Common myeloid progenitor, CD34-positive (primary cell): ENCODE measurements at regions of chr1 and their contacts with region 1.

Region 1: GRCh38 chr1:248622570-248623001 is 12.3 kb downstream of the OR2T11 start:
- DNase-seq: peak; percentile 49 to 73 (median 69)
- H3K4me3 ChIP-seq: no peak overlapping the region
- H3K27ac ChIP-seq: no peak overlapping the region
- H3K4me1 ChIP-seq: no peaks in the 10 kb centered on the region
- H3K27me3 ChIP-seq: no peaks in the 10 kb centered on the region

Region 2: DNA sequence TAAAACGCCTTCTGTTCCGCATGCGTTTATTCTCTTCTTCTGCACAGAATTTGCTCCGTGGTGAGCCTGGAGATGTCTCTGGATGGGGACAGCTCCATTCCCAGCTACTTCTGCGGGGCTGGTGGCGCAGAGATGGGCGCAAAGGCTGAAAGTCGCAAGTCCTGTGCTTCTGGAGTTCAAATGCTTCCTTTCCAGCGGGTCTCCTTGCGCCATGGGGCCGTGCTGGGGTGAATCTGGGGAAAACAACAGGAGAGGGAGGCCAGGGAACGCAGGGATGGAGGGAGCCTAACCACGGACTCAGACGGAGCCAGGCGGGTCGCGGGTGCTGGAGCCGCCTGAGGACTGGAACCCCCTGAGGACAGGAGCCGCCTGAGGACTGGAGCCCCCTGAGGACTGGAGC is 316.5 kb before region 1 on chr1:
- CTCF ChIA-PET with region 1: no interaction called
- POLR2A ChIA-PET with region 1: no interaction called
- DNase-seq: no peak
- H3K4me3 ChIP-seq: no peak overlapping the region
- H3K27ac ChIP-seq: no peak overlapping the region
- H3K4me1 ChIP-seq: no peaks in the 10 kb centered on the region
- H3K27me3 ChIP-seq: no peaks in the 10 kb centered on the region

Region 3: GRCh38 chr1:248611883-248612414 is 10.6 kb before region 1 on chr1:
- CTCF ChIA-PET with region 1: interaction called, 10 read pairs
- POLR2A ChIA-PET with region 1: no interaction called
- DNase-seq: peak in 2 of 3 donors; percentile 18 to 41
- H3K4me3 ChIP-seq: no peak overlapping the region
- H3K27ac ChIP-seq: no peak overlapping the region
- H3K4me1 ChIP-seq: peaks cover 0 to 2% (median 0%) of the 10 kb centered on the region in 4 experiments
- H3K27me3 ChIP-seq: no peaks in the 10 kb centered on the region

Region 4: GRCh38 chr1:248696261-248696660 is 73.7 kb after region 1 on chr1:
- CTCF ChIA-PET with region 1: interaction called, 13 read pairs
- POLR2A ChIA-PET with region 1: no interaction called
- DNase-seq: peak; percentile 47 to 73 (median 70)
- H3K4me3 ChIP-seq: no peak overlapping the region
- H3K27ac ChIP-seq: no peak overlapping the region
- H3K4me1 ChIP-seq: peaks cover 0 to 3% (median 0%) of the 10 kb centered on the region in 4 experiments
- H3K27me3 ChIP-seq: peaks cover 0 to 6% (median 0%) of the 10 kb centered on the region in 5 experiments

Region 5: DNA sequence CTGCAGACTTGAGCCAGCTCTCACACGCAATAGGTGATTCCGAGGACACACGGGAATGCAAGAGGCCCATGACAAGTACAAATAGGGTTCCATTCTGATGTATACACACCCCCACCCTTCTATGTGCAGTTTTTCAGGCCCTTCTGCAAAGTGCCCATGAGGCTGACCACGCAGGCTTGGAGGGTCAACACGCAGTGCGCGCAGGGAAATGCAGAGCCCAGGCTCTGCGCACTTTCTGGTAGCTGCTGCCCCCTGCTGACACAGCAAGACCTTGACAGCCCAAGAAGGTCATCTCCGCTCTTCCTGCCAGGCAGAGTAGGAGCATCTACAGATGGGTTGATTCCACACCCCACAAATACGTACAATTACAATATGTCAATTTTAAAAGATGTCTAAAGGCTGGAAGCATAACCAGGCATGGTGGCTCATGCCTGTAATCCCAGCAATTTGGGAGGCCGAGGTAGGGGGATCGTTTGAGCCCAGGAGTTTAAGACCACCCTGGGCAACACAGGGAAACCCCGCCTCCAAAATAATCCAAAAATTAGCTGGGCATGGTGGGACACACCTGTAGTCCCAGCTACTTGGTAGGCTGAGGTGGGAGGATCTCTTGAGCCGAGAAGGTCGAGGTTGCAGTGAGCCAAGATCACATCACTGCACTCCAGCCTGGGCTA is 184.6 kb after region 1 on chr1:
- CTCF ChIA-PET with region 1: interaction called, 58 read pairs
- POLR2A ChIA-PET with region 1: no interaction called
- DNase-seq: peak; percentile 54 to 72 (median 70)
- H3K4me3 ChIP-seq: peak overlapping the region in 1 of 7 experiments; percentile 8
- H3K27ac ChIP-seq: no peak overlapping the region
- H3K4me1 ChIP-seq: peaks cover 19 to 49% (median 43%) of the 10 kb centered on the region in 4 experiments
- H3K27me3 ChIP-seq: no peaks in the 10 kb centered on the region